OCI-LY7 (cell line): ENCODE measurements at regions of chr5 and their contacts with region 1.

Region 1: DNA sequence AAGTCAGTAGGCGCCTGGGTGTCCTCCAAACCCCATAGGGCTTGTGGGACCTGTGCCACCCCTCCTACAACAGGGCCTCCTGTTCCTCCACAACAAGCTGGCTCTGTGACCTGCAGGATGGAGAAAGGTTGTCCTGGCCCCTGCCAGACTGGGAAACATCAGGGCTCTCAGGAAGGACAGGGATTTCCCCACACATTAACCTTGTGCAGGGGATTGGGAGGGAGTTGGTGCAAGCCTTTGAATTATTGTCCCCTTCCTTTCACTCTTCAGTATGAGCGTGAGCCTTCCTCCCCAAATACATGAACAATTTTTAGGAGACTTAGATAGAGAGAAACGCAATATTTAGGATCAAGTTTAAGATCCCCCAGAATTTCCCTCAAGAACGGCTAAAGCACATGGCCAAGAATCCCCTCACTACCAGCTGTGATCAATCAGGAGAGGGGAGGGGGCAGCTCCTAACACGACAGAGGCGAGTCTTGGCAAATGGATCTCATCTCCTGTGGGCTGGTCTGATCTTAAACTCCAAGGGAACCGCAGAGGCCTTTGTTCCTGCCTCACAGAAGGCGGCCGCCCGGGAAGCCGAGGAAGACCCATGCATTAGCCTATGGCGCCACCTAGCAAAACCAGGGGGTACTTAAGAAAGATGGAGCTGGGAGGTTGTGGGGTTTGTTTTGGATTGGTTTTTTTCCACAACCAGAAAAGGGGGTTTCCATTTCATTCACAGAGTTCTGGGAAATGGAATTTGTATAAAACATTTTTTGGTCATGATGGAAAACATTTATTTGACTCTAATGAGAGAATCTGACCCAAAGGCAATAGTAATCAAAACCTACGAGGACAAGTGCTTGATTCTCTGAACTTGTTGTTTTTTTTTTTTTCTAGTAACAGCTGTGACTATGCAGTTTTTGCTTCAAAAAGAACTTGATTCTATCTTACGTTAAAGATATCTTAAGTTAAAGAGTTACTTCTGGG is 36.1 kb upstream of the OSMR start:
- DNase-seq: peak; percentile 51
- H3K4me3 ChIP-seq: no peak overlapping the region
- H3K27ac ChIP-seq: no peak overlapping the region
- H3K4me1 ChIP-seq: no peaks in the 10 kb centered on the region
- CTCF ChIP-seq: peak; percentile 84

Region 2: GRCh38 chr5:38382898-38383297 is 426.8 kb before region 1 on chr5:
- CTCF ChIA-PET with region 1: no interaction called
- POLR2A ChIA-PET with region 1: no interaction called
- intact Hi-C with region 1: loop called (anchors 5 kb)
- DNase-seq: peak; percentile 68
- H3K4me3 ChIP-seq: no peak overlapping the region
- H3K27ac ChIP-seq: no peak overlapping the region
- H3K4me1 ChIP-seq: no peaks in the 10 kb centered on the region
- CTCF ChIP-seq: peak; percentile 85

Region 3: DNA sequence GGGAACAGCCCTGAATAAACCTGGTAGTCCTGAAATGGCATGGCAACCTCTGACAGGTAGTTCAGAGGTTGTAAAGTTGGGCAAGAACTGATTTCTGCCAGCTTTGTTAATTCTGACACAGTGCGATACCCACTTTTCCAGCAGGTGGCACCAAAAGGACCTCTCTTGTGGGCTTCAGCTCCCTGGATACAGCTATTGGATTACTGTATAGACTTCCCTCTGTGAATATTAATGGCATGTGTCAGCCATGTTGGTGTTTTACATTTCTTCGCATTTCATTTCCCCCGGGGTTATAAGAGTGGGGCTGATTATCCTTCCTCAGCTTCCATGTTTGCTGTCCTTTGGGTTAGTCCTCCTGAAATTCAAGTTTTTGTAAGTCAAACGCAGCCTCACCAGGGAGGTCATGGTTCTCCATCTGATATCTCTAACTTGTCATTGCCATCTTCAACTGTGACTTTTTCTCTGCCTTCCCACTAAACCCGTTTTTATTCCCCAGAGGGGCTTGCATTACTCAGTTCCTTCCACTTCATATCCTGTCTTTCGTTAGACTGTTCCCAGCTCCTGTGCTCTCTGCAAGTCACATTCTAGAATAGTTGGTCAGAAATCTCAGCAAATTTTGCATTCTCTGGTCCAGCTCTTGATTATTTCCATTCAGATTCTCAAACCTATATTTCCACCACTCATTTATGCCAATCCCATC is 388.8 kb before region 1 on chr5:
- CTCF ChIA-PET with region 1: no interaction called
- POLR2A ChIA-PET with region 1: no interaction called
- intact Hi-C with region 1: loop called (anchors 1 kb)
- DNase-seq: peak; percentile 36
- H3K4me3 ChIP-seq: no peak overlapping the region
- H3K27ac ChIP-seq: no peak overlapping the region
- H3K4me1 ChIP-seq: no peaks in the 10 kb centered on the region
- CTCF ChIP-seq: peak; percentile 84